ENCODE measurements at regions of chr2 and their contacts with region 1.

Region 1: DNA sequence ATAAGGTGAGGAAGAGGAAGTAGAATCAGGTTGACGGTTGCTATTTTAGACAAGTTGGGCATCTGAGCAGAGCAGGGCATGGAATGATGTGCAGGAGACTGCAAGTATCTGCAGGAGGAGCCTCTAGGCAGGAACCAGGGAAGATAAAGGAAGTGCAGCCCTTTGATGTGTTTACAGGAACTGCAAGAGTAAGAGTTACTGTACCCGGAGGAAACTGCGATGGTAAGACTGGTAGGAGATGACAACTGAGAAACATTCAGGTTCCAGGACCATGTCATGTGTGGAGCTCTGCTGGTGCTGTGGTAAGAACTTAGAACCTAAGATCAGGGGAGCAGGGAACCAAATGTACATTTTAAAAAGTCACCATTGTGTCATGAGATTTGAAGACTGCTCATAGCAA is 134.3 kb upstream of the STON1 start:
- DNase-seq: no peak
- H3K4me3 ChIP-seq: no peak overlapping the region
- H3K27ac ChIP-seq: no peak overlapping the region
- H3K4me1 ChIP-seq: peaks cover 0 to 5% (median 0%) of the 10 kb centered on the region in 4 donors
- H3K27me3 ChIP-seq: no peaks in the 10 kb centered on the region
- CTCF ChIP-seq: no peak
- EP300 ChIP-seq: no peak
- POLR2A ChIP-seq: no peak

Region 2: DNA sequence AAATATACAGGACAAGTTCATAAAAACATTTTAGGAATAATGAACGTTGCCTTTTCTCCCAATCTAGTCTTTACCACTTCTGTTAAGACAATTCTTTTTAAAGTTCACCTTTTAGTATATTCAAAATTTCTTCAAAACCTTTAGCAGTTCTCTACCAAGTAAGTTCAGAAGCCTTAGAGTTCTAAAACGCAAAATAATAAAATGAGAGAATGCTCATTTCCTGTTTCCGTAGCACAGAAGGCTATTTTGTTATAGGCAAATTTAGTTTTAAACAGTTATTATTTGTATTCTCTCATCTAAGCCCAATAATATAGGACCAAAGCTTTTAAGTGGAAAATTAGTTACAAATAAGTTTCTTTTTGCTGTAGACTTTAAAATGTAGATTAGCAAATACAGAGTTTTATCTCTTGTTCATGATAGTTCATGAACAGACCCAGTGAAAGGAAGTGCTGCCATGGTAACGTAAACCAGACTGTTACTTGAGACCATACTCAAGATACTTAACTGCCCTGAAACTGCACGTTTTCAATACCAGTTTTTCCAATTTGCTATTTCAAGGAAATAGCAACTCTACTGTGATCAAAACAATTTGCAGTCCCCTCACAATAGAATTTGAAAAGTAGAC is 38.8 kb before region 1 on chr2:
- in situ Hi-C with region 1: no loop called
- intact Hi-C with region 1: loop called (anchors 1 kb)
- DNase-seq: no peak
- H3K4me3 ChIP-seq: no peak overlapping the region
- H3K27ac ChIP-seq: peak overlapping the region in 2 of 4 donors; percentile 8 to 35
- H3K4me1 ChIP-seq: peaks cover 7 to 32% (median 18%) of the 10 kb centered on the region in 4 donors
- H3K27me3 ChIP-seq: no peaks in the 10 kb centered on the region
- CTCF ChIP-seq: no peak
- EP300 ChIP-seq: no peak
- POLR2A ChIP-seq: no peak

Measured in transverse colon (tissue), 4 donors.